Endothelial cell of umbilical vein (primary cell): ENCODE measurements at regions of chr20 and their contacts with region 1.

Region 1: DNA sequence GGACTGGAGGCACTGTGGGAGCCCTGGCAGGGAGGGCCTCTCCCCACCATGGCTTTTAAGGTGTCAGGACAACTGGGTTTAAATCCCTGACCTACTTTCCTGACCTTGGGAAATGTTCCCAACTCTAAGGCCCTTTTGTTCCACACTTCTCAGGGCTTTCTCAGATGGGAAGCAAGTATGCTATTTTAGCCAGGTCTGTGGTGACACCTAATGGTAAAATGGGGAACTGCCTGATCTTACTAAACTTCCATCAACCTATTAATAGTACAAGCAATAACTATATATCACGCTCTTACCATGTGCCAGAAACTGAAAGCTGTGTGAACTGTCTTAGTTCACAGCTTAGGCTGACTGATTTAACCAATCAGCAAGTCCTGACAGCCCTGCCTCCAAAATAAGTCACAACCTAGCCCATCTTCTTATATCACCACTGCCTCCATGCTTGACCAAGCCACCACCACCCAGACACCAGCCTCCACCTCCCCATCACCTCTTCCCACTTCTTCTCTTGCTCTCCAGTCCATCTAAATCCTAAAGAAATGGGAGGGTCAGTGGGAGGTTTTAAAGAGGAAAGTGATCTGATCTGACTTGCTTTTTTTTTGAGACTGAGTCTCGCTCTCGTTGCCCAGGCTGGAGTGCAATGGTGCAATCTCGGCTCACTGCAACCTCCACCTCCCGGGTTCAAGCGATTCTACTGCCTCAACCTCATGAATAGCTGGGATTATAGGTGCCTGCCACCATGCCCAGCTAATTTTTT is 6.9 kb upstream of the BLCAP start:
- DNase-seq: peak; percentile 95
- H3K4me3 ChIP-seq: no peak overlapping the region
- H3K27ac ChIP-seq: no peak overlapping the region
- H3K4me1 ChIP-seq: peaks cover 15% of the 10 kb centered on the region
- H3K27me3 ChIP-seq: no peaks in the 10 kb centered on the region
- CTCF ChIP-seq: peak; percentile 66 to 77
- POLR2A ChIP-seq: no peak

Region 2: DNA sequence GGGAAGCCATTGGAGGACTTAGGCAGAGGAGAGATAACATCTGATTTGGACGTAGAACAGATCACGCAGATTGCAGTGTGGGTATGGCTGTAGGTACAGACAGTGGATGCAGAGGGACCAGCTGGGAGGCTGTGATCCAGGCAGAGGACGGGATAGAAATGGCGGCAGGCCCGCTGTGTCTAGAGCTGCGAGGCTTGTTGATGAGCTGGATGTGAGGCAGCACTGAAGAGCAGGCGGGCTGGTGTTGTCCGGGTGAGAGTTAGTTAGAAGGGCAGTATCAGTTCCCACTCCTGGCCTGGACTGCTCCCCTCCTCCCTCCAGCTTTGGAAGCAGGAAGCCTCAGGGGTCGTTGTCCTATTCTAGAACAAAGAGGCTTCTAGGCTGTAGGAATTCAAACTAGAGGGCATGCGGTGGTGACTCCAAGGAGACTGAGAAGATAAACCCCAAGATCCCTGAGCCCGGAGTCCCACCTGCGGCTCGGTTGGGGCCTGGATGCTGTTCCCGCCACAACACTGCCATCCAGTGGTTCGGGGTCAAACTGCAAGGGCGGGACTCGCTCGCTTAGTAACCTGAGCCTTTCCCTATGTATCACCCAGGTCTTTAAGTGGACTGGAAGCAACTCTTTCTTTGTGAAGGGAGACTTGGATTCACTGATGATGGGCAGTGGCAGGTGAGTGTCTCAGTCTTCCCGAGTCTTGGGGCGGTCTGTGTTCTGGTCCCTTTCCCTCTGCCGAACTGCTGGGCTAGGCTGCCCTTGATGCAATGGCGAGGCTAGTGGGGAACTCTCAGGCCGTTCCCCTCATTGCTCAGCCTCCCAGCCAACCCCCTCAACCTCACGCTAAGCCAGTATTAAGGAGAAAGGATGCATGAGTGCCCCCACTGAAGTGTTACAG is 647.5 kb before region 1 on chr20:
- CTCF ChIA-PET with region 1: no interaction called
- POLR2A ChIA-PET with region 1: no interaction called
- dilution Hi-C with region 1: no loop called
- intact Hi-C with region 1: no loop called
- DNase-seq: peak; percentile 77
- H3K4me3 ChIP-seq: no peak overlapping the region
- H3K27ac ChIP-seq: no peak overlapping the region
- H3K4me1 ChIP-seq: no peaks in the 10 kb centered on the region
- H3K27me3 ChIP-seq: no peaks in the 10 kb centered on the region
- CTCF ChIP-seq: peak; percentile 95 to 97
- POLR2A ChIP-seq: no peak

Region 3: DNA sequence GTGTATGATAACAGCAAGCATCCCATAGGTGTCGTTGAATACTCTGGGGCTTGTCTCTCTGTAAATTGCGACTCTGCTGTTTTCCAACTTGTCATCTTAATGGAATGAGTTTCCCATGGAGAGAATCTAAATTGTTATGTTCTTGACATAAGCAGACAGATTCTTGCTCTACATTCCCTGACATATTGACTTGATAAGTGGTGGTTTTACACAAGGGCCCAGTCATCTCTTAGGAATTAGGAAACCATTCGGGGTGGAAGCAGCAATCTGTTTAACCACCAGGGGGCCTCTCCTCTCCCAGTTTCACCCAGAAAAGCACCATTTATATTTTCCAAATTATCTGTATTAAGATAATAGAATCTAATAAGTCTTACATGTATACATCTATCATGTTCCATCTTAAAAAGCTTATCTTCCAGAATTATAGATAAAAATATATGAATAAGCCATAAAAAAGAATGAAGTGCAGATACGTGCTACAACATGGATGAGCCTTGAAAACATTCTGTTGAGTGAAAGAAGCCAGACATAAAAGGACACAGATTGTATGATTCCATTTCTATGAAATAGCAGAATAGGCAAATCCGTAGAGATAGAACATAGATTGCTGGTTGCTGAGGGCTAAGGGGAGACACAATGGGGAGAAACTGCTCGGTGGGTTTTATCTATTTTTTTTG is 332.2 kb before region 1 on chr20:
- CTCF ChIA-PET with region 1: interaction called, 54 read pairs
- POLR2A ChIA-PET with region 1: no interaction called
- dilution Hi-C with region 1: no loop called
- intact Hi-C with region 1: loop called (anchors 1 kb)
- DNase-seq: peak; percentile 65
- H3K4me3 ChIP-seq: no peak overlapping the region
- H3K27ac ChIP-seq: peak overlapping the region; percentile 19
- H3K4me1 ChIP-seq: no peaks in the 10 kb centered on the region
- H3K27me3 ChIP-seq: no peaks in the 10 kb centered on the region
- CTCF ChIP-seq: peak; percentile 67 to 79
- POLR2A ChIP-seq: no peak

Region 4: DNA sequence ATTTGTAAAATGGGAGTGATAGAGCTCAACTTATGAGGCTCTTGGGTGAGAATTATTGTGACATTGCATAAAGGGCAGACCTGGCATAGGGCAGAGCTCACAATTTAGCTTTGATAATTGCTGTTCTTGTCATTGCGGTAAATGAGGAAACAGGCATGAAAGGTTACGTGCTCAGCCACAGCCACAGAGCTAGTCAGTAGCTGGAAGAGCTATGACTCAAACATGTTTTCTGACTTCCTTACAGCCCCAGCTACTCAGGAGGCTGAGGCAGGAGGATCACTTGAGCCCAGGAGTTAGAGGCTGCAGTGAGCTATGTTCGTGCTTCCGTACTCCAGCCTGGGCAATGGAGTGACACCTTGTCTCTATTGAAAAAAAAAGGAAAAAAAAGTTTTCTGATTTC is 269.4 kb before region 1 on chr20:
- CTCF ChIA-PET with region 1: interaction called, 104 read pairs
- POLR2A ChIA-PET with region 1: no interaction called
- dilution Hi-C with region 1: no loop called
- intact Hi-C with region 1: loop called (anchors 1 kb)
- DNase-seq: no peak
- H3K4me3 ChIP-seq: no peak overlapping the region
- H3K27ac ChIP-seq: no peak overlapping the region
- H3K4me1 ChIP-seq: no peaks in the 10 kb centered on the region
- H3K27me3 ChIP-seq: peaks cover 5 to 7% of the 10 kb centered on the region in 2 experiments
- CTCF ChIP-seq: no peak
- POLR2A ChIP-seq: no peak

Region 5: GRCh38 chr20:37270576-37271420 is 263.8 kb before region 1 on chr20:
- CTCF ChIA-PET with region 1: interaction called, 104 read pairs
- POLR2A ChIA-PET with region 1: no interaction called
- dilution Hi-C with region 1: no loop called
- intact Hi-C with region 1: loop called (anchors 1 kb)
- DNase-seq: no peak
- H3K4me3 ChIP-seq: no peak overlapping the region
- H3K27ac ChIP-seq: no peak overlapping the region
- H3K4me1 ChIP-seq: no peaks in the 10 kb centered on the region
- H3K27me3 ChIP-seq: no peaks in the 10 kb centered on the region
- CTCF ChIP-seq: no peak
- POLR2A ChIP-seq: no peak

Region 6: GRCh38 chr20:37276494-37277252 is 257.9 kb before region 1 on chr20:
- CTCF ChIA-PET with region 1: interaction called, 37 read pairs
- POLR2A ChIA-PET with region 1: no interaction called
- dilution Hi-C with region 1: no loop called
- intact Hi-C with region 1: no loop called
- DNase-seq: peak; percentile 75
- H3K4me3 ChIP-seq: no peak overlapping the region
- H3K27ac ChIP-seq: no peak overlapping the region
- H3K4me1 ChIP-seq: peaks cover 9% of the 10 kb centered on the region
- H3K27me3 ChIP-seq: peaks cover 0 to 2% of the 10 kb centered on the region in 2 experiments
- CTCF ChIP-seq: peak; percentile 21 to 22
- POLR2A ChIP-seq: no peak

Region 7: DNA sequence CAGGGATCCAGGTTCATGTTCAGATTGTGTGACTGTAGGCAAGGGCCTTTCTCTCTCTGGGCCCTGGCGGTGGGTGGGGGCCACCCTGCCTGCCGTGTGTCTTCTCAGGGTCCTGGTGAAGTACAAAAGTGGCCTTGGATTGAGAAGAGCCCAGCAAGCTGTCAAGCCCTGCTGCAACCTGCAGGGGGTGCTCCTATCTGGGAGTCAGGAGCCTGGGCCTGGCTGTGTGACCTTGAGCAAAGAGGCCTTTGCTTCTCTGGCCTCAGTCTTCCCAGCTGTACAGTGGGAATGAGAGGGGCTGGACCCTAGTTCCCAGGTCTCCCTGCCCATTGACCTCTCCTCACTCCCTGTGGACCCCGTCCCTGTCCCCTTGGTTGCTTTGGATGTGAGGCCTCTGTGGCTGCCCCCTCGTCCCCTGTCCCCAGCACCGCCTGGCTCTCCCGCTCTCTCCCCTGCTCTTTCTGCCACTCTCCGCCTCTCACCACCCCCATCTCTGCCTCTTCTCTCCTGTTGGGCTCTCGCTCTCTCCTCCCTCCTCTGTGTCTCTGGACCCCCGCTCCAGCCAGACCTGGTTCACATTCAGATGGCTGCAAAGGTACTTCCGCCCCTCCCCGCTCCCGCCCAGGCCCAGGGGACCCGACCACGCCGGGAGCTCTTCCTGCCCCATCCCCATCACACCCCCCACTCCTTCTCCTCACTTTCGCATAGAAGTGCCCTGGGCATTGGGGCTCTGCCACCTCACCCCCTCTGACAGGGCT is 142.0 kb before region 1 on chr20:
- CTCF ChIA-PET with region 1: interaction called, 4 read pairs
- POLR2A ChIA-PET with region 1: no interaction called
- dilution Hi-C with region 1: no loop called
- intact Hi-C with region 1: loop called (anchors 1 kb)
- DNase-seq: no peak
- H3K4me3 ChIP-seq: no peak overlapping the region
- H3K27ac ChIP-seq: no peak overlapping the region
- H3K4me1 ChIP-seq: peaks cover 9% of the 10 kb centered on the region
- H3K27me3 ChIP-seq: no peaks in the 10 kb centered on the region
- CTCF ChIP-seq: peak; percentile 36 to 52
- POLR2A ChIP-seq: no peak

Region 8: GRCh38 chr20:37406010-37406998 is 128.3 kb before region 1 on chr20:
- CTCF ChIA-PET with region 1: no interaction called
- POLR2A ChIA-PET with region 1: no interaction called
- dilution Hi-C with region 1: no loop called
- intact Hi-C with region 1: loop called (anchors 5 kb)
- DNase-seq: peak; percentile 57
- H3K4me3 ChIP-seq: peak overlapping the region in 2 of 3 experiments; percentile 5 to 29
- H3K27ac ChIP-seq: no peak overlapping the region
- H3K4me1 ChIP-seq: peaks cover 10% of the 10 kb centered on the region
- H3K27me3 ChIP-seq: peaks cover 0 to 8% of the 10 kb centered on the region in 2 experiments
- CTCF ChIP-seq: no peak
- POLR2A ChIP-seq: peak; percentile 71

Region 9: DNA sequence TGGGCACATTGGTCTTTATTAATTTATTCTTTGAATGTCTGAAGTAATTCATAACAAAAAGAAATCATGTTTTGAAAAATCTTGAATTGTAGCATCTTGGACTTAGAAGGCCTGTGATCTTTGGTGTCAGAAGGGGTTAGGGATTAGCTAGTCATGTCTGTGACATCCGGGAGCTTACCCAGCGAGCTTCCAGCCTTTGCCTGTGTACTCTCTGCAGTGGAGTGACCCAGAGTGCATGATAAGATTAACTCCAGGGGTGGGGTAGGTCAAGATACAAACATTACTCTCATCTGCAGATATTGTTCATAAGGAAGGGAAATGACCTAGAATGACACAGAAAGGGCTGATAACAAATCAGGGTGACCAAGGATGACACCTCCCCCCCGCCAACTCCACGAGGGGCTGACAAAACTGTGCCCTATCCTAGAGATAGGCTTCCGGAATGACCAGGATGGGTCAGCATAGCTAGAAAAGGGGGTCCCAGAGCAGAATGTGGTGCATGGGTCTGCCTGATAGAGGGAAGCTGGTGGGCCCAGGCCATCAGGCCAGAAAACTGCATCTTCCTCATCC is 49.7 kb after region 1 on chr20:
- CTCF ChIA-PET with region 1: no interaction called
- POLR2A ChIA-PET with region 1: no interaction called
- dilution Hi-C with region 1: no loop called
- intact Hi-C with region 1: no loop called
- DNase-seq: no peak
- H3K4me3 ChIP-seq: no peak overlapping the region
- H3K27ac ChIP-seq: no peak overlapping the region
- H3K4me1 ChIP-seq: no peaks in the 10 kb centered on the region
- H3K27me3 ChIP-seq: peaks cover 2 to 20% of the 10 kb centered on the region in 2 experiments
- CTCF ChIP-seq: no peak
- POLR2A ChIP-seq: no peak

Region 10: GRCh38 chr20:37627060-37627769 is 92.6 kb after region 1 on chr20:
- CTCF ChIA-PET with region 1: no interaction called
- POLR2A ChIA-PET with region 1: no interaction called
- dilution Hi-C with region 1: no loop called
- intact Hi-C with region 1: no loop called
- DNase-seq: peak; percentile 52
- H3K4me3 ChIP-seq: no peak overlapping the region
- H3K27ac ChIP-seq: no peak overlapping the region
- H3K4me1 ChIP-seq: no peaks in the 10 kb centered on the region
- H3K27me3 ChIP-seq: peaks cover 2 to 6% of the 10 kb centered on the region in 2 experiments
- CTCF ChIP-seq: no peak
- POLR2A ChIP-seq: no peak